Activated T-helper 1 cell treated with anti-CD3 and anti-CD28 coated beads, Interleukin-12 subunit alpha, Interleukin-12 subunit beta, Interleukin-2, Interleukin-4 antibody, amounts not matched to agents 30 ng/mL and 10 ng/mL and 1 ng/mL, durations not matched to agents 14 hours and 24 hours and 36 hours (primary cell): ENCODE measurements at regions of chr13 and their contacts with region 1.

Region 1: DNA sequence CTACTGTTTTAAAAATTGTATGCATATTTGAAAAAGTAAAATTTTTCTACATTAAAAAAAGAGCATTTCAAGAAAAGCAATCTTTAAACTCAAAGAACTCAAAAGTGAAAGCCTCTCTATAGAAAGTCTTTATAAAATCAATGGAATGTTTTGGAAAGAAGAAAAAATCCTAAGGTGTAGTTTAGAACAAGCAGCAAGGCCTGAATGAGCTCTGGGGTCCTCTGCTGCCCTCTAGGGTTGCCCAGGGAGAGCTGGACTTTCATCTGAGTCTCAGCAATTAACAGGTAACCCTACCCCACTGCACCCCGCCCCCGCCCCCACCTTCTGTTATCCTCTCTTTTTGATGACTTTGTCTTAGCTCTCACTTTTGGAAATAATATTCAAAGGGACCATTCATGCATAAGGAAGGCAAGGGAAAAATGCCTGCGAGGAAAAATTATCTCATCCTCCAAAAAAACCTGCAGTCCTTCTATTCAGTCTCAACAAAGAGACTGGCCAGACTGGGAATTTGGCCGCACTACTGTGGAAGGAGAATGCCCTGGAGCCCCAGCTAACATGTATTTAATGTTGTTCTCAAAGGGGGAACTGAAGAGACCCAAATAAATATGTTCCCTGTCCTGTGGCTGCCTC is 24.1 kb downstream of the SLC25A30 start:
- DNase-seq: no peak
- H3K4me3 Mint-ChIP-seq: no peak overlapping the region
- H3K27ac Mint-ChIP-seq: no peak overlapping the region
- H3K4me1 Mint-ChIP-seq: peaks cover 51% of the 10 kb centered on the region
- H3K27me3 Mint-ChIP-seq: no peaks in the 10 kb centered on the region

Region 2: GRCh38 chr13:45047394-45048310 is 346.4 kb before region 1 on chr13:
- intact Hi-C with region 1: loop called (anchors 2 kb)
- DNase-seq: peak; percentile 61
- H3K4me3 Mint-ChIP-seq: peak overlapping the region; percentile 76
- H3K27ac Mint-ChIP-seq: no peak overlapping the region
- H3K4me1 Mint-ChIP-seq: peaks cover 16% of the 10 kb centered on the region
- H3K27me3 Mint-ChIP-seq: peaks cover 33% of the 10 kb centered on the region

Region 3: DNA sequence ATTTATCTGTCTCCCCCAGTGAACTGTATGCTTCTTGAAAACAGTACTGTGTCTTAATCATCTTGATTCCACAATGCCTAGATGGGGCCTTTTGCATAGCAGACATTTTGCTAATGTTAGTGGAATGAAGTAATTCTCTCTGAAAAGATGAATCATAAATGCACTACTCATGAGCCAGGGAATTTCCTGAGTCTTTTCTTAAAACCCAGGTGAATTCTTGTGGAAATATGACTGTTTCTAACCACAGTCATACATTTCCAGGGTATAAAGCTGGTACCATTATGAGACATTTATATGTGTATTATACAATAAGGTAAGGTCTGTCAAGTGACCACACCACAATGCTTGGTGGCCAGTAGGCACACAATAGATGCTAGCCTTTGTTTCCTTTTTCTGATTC is 187.7 kb before region 1 on chr13:
- intact Hi-C with region 1: loop called (anchors 1 kb)
- DNase-seq: no peak
- H3K4me3 Mint-ChIP-seq: no peak overlapping the region
- H3K27ac Mint-ChIP-seq: peak overlapping the region; percentile 23
- H3K4me1 Mint-ChIP-seq: peaks cover 15% of the 10 kb centered on the region
- H3K27me3 Mint-ChIP-seq: no peaks in the 10 kb centered on the region

Region 4: GRCh38 chr13:45417790-45418534 is 23.9 kb after region 1 on chr13 and contains the start of gene SLC25A30:
- intact Hi-C with region 1: loop called (anchors 1 kb)
- DNase-seq: peak; percentile 85
- H3K4me3 Mint-ChIP-seq: peak within 1 kb of the TSS; percentile 94
- H3K27ac Mint-ChIP-seq: peak within 1 kb of the TSS; percentile 92
- H3K4me1 Mint-ChIP-seq: peaks cover 18% of the 10 kb centered on the region
- H3K27me3 Mint-ChIP-seq: no peaks in the 10 kb centered on the region
- total RNA-seq, gene SLC25A30: 16.0 and 16.3 TPM in 2 replicates